A549 (cell line): ENCODE measurements at regions of chr5 and their contacts with region 1.

Region 1: GRCh38 chr5:923281-923873 is 30.7 kb downstream of the TRIP13 start:
- DNase-seq: peak; percentile 80 to 89
- ATAC-seq: peak; percentile 96 to 99
- H3K4me3 ChIP-seq: no peak overlapping the region
- H3K27ac ChIP-seq: peak overlapping the region in 1 of 2 experiments; percentile 65; a peak in 3 of 6 replicates
- H3K4me1 ChIP-seq: peaks cover 13% of the 10 kb centered on the region
- CTCF ChIP-seq: peak; percentile 93
- EP300 ChIP-seq: no peak
- POLR2A ChIP-seq: no peak
- RAD21 ChIP-seq: peak; percentile 95 to 98

Region 2: GRCh38 chr5:939368-939767 is 16.0 kb after region 1 on chr5:
- CTCF ChIA-PET with region 1: interaction called, 59 read pairs
- POLR2A ChIA-PET with region 1: no interaction called
- DNase-seq: no peak
- ATAC-seq: no peak
- H3K4me3 ChIP-seq: no peak overlapping the region
- H3K27ac ChIP-seq: no peak overlapping the region
- H3K4me1 ChIP-seq: no peaks in the 10 kb centered on the region
- CTCF ChIP-seq: no peak
- EP300 ChIP-seq: no peak
- POLR2A ChIP-seq: no peak
- RAD21 ChIP-seq: no peak

Region 3: GRCh38 chr5:989961-990530 is 66.7 kb after region 1 on chr5:
- CTCF ChIA-PET with region 1: interaction called, 16 read pairs
- POLR2A ChIA-PET with region 1: no interaction called
- DNase-seq: no peak
- ATAC-seq: peak in 1 of 2 experiments; percentile 70; a peak in 3 of 6 replicates
- H3K4me3 ChIP-seq: no peak overlapping the region
- H3K27ac ChIP-seq: no peak overlapping the region
- H3K4me1 ChIP-seq: no peaks in the 10 kb centered on the region
- CTCF ChIP-seq: no peak
- EP300 ChIP-seq: no peak
- POLR2A ChIP-seq: no peak
- RAD21 ChIP-seq: peak; percentile 18 to 26; a peak in 1 of 5 replicates

Region 4: DNA sequence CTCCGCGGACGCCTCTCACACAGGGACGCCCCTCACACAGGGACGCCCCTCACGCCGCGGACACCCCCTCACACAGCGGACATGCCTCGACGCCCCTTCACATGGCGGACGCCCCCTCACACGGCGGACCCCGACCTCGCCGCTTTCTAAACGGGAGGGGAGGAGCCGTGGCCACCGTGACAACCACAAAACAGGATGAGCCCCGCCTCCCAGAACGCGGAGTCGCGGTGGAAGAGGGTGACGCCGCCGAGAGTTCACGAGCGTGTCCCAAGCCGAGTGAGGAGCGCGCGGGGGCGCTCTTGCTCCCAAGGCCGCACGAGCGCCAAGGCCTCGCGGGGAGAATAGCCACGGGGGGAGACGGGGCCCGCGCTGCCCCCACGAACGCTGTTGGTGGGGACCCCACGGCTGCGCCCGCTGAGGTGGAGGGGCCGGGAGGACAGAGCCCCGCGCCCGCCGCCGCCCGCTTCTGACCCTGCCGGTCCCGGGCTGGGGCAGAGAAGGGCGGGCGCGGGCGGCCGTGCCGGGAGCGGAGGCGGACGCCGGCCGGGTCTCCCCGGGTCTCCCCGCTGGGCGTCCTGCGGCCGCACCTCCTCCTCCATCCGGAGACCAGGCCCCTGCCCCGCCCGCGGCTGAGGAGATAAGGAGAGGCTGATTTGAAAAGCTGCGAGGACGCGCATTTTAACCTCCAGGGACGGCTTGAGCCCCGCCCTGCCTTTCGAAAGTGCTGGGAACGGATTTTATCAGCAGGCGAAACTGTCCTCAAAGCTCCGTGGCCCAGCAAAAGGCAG is 81.3 kb after region 1 on chr5:
- CTCF ChIA-PET with region 1: interaction called, 82 read pairs
- POLR2A ChIA-PET with region 1: no interaction called
- DNase-seq: peak; percentile 61 to 76
- ATAC-seq: peak; percentile 60 to 79
- H3K4me3 ChIP-seq: peak overlapping the region; percentile 63
- H3K27ac ChIP-seq: peak overlapping the region; percentile 89 to 92
- H3K4me1 ChIP-seq: peaks cover 16% of the 10 kb centered on the region
- CTCF ChIP-seq: peak; percentile 79
- EP300 ChIP-seq: no peak
- POLR2A ChIP-seq: peak; percentile 38; the same call in 1 of the 2 replicates
- RAD21 ChIP-seq: peak; percentile 35 to 59

Region 5: DNA sequence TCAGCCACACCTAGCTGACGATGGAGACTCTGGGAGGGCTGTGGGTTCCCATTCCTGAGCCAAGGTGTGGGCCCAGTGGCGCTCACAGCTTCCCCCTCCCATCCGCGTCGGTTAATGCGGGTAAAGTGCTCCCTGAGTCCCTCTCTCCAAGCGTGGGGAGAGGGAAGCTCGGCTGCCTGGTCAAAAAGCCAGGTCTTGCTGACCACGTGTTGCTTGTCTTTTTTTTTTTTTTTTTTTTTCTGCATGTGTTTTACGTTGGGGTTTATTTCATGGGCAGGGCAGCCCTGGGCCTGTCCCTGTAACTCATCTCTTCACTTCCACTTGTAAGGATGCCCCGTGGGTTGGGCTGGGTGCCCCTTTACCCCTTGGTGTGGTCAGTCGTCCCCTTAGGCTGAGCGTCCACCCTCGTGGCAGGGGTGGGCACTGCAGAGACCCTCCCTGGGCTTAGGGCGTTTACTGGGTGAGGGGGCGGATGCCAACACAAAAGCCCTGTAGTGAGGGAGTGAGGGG is 97.1 kb after region 1 on chr5:
- CTCF ChIA-PET with region 1: interaction called, 10 read pairs
- POLR2A ChIA-PET with region 1: no interaction called
- DNase-seq: no peak
- ATAC-seq: peak in 1 of 2 experiments; percentile 14; a peak in 2 of 6 replicates
- H3K4me3 ChIP-seq: no peak overlapping the region
- H3K27ac ChIP-seq: no peak overlapping the region
- H3K4me1 ChIP-seq: no peaks in the 10 kb centered on the region
- CTCF ChIP-seq: no peak
- EP300 ChIP-seq: no peak
- POLR2A ChIP-seq: no peak
- RAD21 ChIP-seq: no peak

Region 6: DNA sequence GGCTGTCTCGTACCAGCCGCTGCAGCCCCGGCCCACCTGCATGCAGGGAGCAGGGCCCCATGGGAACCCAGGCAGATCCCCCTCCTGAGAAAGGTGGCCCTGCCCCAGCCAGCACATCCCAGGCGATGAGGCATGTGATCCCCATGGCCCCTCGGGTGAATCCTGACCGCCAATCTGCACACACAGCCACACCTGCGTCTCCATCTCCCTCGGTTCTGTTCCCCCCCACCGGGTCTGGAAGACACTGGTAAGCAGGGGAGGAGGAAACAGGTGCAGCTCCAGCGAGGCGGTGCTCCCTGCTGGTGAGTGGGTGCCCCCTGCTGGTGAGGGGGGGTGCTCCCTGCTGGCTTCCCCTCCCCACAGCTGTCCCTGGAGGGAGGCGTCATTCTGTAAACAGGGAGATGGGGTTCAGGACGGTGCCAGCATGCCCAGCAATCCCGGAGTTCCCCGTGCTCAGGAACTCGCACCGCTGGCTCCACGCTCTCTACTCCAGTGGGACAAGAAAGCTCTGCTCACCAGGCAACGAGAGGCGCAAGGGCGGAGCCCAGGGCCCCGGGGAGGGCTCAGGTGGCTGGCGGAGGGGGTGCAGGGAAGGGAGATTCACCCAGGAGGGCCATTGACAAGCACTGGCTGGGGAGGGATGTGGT is 216.9 kb after region 1 on chr5:
- CTCF ChIA-PET with region 1: interaction called, 17 read pairs
- POLR2A ChIA-PET with region 1: no interaction called
- DNase-seq: peak; percentile 67
- ATAC-seq: peak; percentile 74 to 87
- H3K4me3 ChIP-seq: no peak overlapping the region
- H3K27ac ChIP-seq: 0 out of 6 replicates have a peak overlapping the region, but pooled peaks of 1 of the 2 experiments have one; percentile 24
- H3K4me1 ChIP-seq: peaks cover 5% of the 10 kb centered on the region; the same call in 2 of the 3 replicates
- CTCF ChIP-seq: peak; percentile 82
- EP300 ChIP-seq: no peak
- POLR2A ChIP-seq: no peak
- RAD21 ChIP-seq: peak; percentile 89 to 91

Region 7: GRCh38 chr5:1174122-1174936 is 251.0 kb after region 1 on chr5:
- CTCF ChIA-PET with region 1: interaction called, 70 read pairs
- POLR2A ChIA-PET with region 1: interaction called, 4 read pairs
- DNase-seq: peak; percentile 79 to 87
- ATAC-seq: peak; percentile 83 to 91
- H3K4me3 ChIP-seq: peak overlapping the region; percentile 33; the same call in 2 of the 3 replicates
- H3K27ac ChIP-seq: peak overlapping the region; percentile 73 to 74
- H3K4me1 ChIP-seq: peaks cover 5% of the 10 kb centered on the region
- CTCF ChIP-seq: peak; percentile 81
- EP300 ChIP-seq: no peak
- POLR2A ChIP-seq: no peak
- RAD21 ChIP-seq: peak; percentile 72 to 73